GM10248 (cell line): ENCODE measurements at regions of chr11 and their contacts with region 1.

Region 1: GRCh38 chr11:75689863-75690609 is 21.2 kb upstream of the MAP6 start:
- DNase-seq: peak; percentile 46
- CTCF ChIP-seq: no peak

Region 2: GRCh38 chr11:75673977-75674582 is 16.0 kb before region 1 on chr11:
- CTCF ChIA-PET with region 1: interaction called, 10 read pairs
- POLR2A ChIA-PET with region 1: no interaction called
- DNase-seq: no peak
- CTCF ChIP-seq: no peak